ENCODE measurements at regions of chr1 and their contacts with region 1.

Region 1: GRCh38 chr1:48498096-48498791 is 26.2 kb upstream of the SPATA6 start:
- DNase-seq: peak; percentile 77
- H3K4me3 Mint-ChIP-seq: no peak overlapping the region
- H3K27ac Mint-ChIP-seq: no peak overlapping the region
- H3K4me1 Mint-ChIP-seq: peaks cover 4% of the 10 kb centered on the region
- H3K27me3 Mint-ChIP-seq: no peaks in the 10 kb centered on the region

Region 2: DNA sequence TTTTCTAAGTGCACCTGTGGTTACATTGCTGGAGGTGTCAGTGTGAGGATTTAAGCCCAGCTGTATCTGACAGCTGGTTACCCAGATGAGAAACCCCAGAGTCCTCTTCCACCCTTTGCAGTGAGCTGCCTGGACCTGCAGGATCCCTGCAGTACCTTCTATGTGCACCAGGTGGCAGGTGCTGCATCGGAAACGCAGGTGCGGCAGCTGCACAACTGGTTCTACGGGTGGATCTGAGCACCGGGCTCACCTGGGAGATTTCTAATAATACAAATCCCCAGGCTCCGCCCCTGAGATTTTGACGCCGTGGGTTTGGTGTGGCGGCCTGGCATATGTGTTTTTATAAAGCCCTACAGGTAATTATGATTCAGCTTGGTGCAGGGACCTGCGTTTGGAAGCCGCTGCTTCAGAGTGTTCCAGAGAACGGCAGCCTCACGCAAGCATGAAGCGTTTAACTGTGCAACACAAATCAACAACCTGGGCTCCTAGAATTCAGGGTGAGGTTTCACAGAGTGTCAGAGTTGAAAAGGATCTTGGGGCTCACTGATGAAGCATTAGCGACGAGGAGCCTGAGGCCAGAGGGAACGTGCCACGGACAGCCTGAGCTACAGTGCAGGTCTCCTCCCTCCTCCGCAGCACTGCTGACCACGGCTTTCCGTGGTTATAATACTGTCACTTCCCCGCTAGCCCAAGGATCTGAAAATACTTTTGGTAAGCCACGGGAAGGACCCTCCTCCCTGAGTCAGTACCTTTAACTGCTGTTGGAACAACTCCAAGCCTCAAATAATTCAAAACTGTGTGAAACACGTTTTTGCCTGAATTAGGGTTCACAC is 404.3 kb before region 1 on chr1:
- CTCF ChIA-PET with region 1: no interaction called
- POLR2A ChIA-PET with region 1: no interaction called
- intact Hi-C with region 1: loop called (anchors 5 kb)
- DNase-seq: peak; percentile 82
- H3K4me3 Mint-ChIP-seq: peak overlapping the region; percentile 40
- H3K27ac Mint-ChIP-seq: no peak overlapping the region
- H3K4me1 Mint-ChIP-seq: peaks cover 7% of the 10 kb centered on the region
- H3K27me3 Mint-ChIP-seq: peaks cover 44% of the 10 kb centered on the region

Region 3: GRCh38 chr1:48471691-48472576 is 26.3 kb before region 1 on chr1 and contains the start of gene SPATA6:
- CTCF ChIA-PET with region 1: interaction called, 7 read pairs
- POLR2A ChIA-PET with region 1: no interaction called
- intact Hi-C with region 1: loop called (anchors 1 kb)
- DNase-seq: peak; percentile 96
- H3K4me3 Mint-ChIP-seq: peak within 1 kb of the TSS; percentile 82
- H3K27ac Mint-ChIP-seq: no peak within 1 kb of the TSS
- H3K4me1 Mint-ChIP-seq: peaks cover 27% of the 10 kb centered on the region
- H3K27me3 Mint-ChIP-seq: peaks cover 26% of the 10 kb centered on the region
- total RNA-seq, gene SPATA6: 1.8 to 1.9 TPM

Region 4: DNA sequence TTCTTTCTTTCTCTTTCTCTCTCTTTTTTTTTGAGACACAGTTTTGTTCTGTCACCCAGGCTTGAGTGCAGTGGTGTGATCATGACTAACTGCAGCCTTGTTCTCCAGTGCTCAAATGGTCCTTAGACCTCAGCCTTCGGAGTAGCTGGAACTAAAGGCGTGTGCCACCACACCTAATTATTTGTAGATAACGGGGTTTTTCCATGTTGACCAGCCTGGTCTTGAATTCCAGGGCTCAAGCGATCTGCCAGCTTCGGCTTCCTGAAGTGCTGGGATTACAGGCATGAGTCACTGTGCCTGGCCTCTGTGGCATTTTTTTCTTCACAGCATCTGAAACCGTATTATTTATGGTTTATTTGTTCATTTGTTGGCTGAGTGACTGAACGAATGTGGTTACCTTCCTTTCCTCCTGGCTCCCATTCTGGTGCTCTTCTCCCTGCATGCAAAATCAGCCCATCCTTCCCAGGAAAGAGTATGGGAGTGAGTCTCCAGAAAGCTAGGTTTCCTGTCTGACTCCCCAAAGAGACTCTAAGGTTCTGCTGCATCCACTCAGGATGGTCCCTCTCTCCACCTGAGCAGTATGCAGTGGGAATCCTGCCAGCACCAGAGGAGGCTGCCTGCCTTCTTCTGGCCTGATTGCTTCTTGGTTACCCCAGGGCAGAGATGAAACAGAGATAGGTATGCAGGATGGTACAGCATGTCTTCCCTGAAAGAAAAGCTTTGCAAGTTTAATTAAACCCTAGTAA is 433.4 kb after region 1 on chr1:
- CTCF ChIA-PET with region 1: no interaction called
- POLR2A ChIA-PET with region 1: no interaction called
- intact Hi-C with region 1: no loop called
- DNase-seq: no peak
- H3K4me3 Mint-ChIP-seq: no peak overlapping the region
- H3K27ac Mint-ChIP-seq: no peak overlapping the region
- H3K4me1 Mint-ChIP-seq: no peaks in the 10 kb centered on the region
- H3K27me3 Mint-ChIP-seq: peaks cover 8% of the 10 kb centered on the region

Measured in activated CD4-positive, alpha-beta memory T cell treated with anti-CD3 and anti-CD28 coated beads for 36 hours (primary cell).